Esophagus muscularis mucosa (tissue), 4 donors: ENCODE measurements at regions of chr11 and their contacts with region 1.

Region 1: GRCh38 chr11:22787551-22788162 is 41.9 kb downstream of the SVIP start:
- DNase-seq: no peak
- H3K4me3 ChIP-seq: no peak overlapping the region
- H3K27ac ChIP-seq: no peak overlapping the region
- H3K4me1 ChIP-seq: peaks cover 0 to 3% (median 0%) of the 10 kb centered on the region in 4 donors
- H3K27me3 ChIP-seq: no peaks in the 10 kb centered on the region
- CTCF ChIP-seq: peak; percentile 47 to 70 (median 70)
- EP300 ChIP-seq: no peak
- POLR2A ChIP-seq: no peak

Region 2: DNA sequence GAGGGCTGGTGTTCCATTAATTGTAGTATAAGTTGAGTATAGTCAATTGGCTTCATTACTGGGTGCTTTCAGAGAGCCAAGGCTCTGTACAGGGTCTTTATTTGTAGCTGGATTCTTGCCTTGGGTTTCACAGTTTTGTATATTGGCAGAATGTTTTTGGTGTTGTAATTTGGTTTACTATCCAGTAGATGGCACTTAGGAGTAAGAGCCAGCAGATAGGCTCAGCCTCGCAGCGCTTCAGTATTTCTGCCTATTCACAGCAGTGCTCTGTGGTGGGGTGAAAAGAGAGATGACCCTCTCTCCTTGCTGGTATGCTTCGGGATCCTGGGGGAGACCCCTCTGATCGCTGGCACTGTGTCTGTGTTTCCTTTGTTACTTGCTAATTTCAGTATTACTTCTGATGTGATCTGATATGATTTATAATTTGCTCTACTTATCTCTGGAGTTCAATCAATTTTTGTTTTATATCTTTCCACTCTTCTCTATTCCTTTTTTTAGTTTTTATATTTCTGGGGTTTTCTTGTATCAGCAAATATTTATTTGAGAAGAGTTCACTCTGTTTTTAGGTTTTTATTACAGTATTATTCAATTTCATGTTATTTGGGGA is 542.6 kb before region 1 on chr11:
- intact Hi-C with region 1: no loop called
- DNase-seq: no peak
- H3K4me3 ChIP-seq: no peak overlapping the region
- H3K27ac ChIP-seq: no peak overlapping the region
- H3K4me1 ChIP-seq: no peaks in the 10 kb centered on the region
- H3K27me3 ChIP-seq: no peaks in the 10 kb centered on the region
- CTCF ChIP-seq: peak; percentile 29 to 71 (median 44)
- EP300 ChIP-seq: no peak
- POLR2A ChIP-seq: no peak

Region 3: DNA sequence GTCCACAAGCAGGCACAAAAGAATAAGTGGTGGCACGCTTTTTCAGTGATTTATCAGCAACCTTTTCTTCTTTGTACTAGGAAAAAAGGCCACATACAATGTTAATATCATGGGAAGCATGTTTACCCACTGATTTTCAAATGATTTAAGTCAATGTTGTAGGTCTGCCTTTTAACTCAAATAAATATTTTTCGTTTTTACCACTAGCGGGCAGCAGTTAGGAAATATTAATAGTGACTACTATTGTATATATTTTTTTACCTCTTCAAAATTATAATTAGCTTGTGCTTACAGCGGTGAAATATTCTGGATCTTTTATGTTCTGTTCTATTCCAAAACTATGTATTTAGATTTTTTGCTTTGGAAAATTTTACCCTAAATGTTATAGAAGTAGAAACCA is 455.9 kb before region 1 on chr11:
- intact Hi-C with region 1: loop called (anchors 5 kb)
- DNase-seq: no peak
- H3K4me3 ChIP-seq: no peak overlapping the region
- H3K27ac ChIP-seq: no peak overlapping the region
- H3K4me1 ChIP-seq: no peaks in the 10 kb centered on the region
- H3K27me3 ChIP-seq: peaks cover 0 to 10% (median 0%) of the 10 kb centered on the region in 4 donors
- CTCF ChIP-seq: no peak
- EP300 ChIP-seq: no peak
- POLR2A ChIP-seq: no peak